ENCODE measurements at regions of chr3 and their contacts with region 1.

Region 1: GRCh38 chr3:27861046-27862036 is 139.2 kb upstream of the EOMES start:
- DNase-seq: peak; percentile 83
- H3K4me3 Mint-ChIP-seq: peak overlapping the region; percentile 52
- H3K27ac Mint-ChIP-seq: peak overlapping the region; percentile 87
- H3K4me1 Mint-ChIP-seq: peaks cover 19% of the 10 kb centered on the region
- H3K27me3 Mint-ChIP-seq: no peaks in the 10 kb centered on the region

Region 2: DNA sequence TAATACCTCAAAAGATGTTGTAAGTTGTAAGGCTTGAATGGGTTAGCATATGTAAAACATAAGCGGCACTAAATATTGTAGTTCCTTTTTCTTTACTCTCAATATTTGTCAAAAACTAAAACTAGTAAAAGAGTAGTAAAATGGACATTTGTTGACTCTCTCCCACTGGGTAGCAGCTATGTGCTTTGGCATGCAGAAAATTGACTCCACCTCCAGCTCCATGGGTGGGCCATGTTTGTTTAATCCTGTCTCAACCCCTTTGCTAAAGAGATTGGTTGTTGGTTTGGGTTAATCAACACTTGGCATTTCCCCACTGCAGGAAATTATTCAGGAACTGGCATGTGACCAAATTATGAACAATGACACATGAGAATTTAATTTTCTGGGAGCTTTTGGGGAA is 254.0 kb before region 1 on chr3:
- intact Hi-C with region 1: no loop called
- DNase-seq: no peak
- H3K4me3 Mint-ChIP-seq: no peak overlapping the region
- H3K27ac Mint-ChIP-seq: no peak overlapping the region
- H3K4me1 Mint-ChIP-seq: no peaks in the 10 kb centered on the region
- H3K27me3 Mint-ChIP-seq: no peaks in the 10 kb centered on the region

Region 3: GRCh38 chr3:27880969-27881892 is 19.9 kb after region 1 on chr3:
- intact Hi-C with region 1: loop called (anchors 2 kb)
- DNase-seq: peak; percentile 84
- H3K4me3 Mint-ChIP-seq: peak overlapping the region; percentile 88
- H3K27ac Mint-ChIP-seq: peak overlapping the region; percentile 88
- H3K4me1 Mint-ChIP-seq: peaks cover 33% of the 10 kb centered on the region
- H3K27me3 Mint-ChIP-seq: peaks cover 2% of the 10 kb centered on the region

Region 4: GRCh38 chr3:27914199-27914598 is 52.9 kb after region 1 on chr3:
- intact Hi-C with region 1: no loop called
- DNase-seq: no peak
- H3K4me3 Mint-ChIP-seq: no peak overlapping the region
- H3K27ac Mint-ChIP-seq: no peak overlapping the region
- H3K4me1 Mint-ChIP-seq: no peaks in the 10 kb centered on the region
- H3K27me3 Mint-ChIP-seq: no peaks in the 10 kb centered on the region